Right ventricle myocardium inferior (tissue), 1 donor: ENCODE measurements at regions of chr7 and their contacts with region 1.

Region 1: DNA sequence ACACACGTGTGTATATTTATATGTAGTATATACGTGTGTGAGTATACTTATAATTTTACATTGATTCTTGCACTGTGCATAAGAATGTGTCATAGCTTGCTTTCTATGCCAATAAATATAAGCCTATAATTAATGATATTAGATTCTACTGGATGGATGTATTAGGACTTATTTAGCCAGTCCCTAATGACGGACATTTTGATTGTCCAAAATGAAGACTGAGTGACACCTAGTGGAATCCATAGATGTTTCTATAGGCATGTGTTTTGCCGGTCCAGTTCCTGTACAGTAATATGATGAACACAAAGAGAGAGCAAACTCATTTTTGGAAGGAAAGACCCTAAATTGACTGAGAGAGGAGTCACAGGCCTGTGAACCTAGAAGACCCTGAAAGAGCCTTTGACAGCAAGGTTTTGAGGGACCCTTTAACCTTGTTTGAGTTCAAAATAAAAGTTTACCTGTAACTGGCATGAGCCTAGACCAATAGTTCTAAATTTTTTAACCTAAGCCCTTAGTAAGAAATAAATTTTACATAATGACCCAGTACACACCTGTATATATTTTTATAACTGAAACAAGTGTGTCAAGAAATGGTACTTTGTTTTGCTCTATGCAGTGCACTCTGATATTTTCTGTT is 42.4 kb upstream of the AGBL3 start:
- DNase-seq: no peak
- ATAC-seq: no peak

Region 2: GRCh38 chr7:134632937-134633540 is 310.8 kb before region 1 on chr7:
- intact Hi-C with region 1: loop called (anchors 5 kb)
- DNase-seq: no peak
- ATAC-seq: no peak

Region 3: DNA sequence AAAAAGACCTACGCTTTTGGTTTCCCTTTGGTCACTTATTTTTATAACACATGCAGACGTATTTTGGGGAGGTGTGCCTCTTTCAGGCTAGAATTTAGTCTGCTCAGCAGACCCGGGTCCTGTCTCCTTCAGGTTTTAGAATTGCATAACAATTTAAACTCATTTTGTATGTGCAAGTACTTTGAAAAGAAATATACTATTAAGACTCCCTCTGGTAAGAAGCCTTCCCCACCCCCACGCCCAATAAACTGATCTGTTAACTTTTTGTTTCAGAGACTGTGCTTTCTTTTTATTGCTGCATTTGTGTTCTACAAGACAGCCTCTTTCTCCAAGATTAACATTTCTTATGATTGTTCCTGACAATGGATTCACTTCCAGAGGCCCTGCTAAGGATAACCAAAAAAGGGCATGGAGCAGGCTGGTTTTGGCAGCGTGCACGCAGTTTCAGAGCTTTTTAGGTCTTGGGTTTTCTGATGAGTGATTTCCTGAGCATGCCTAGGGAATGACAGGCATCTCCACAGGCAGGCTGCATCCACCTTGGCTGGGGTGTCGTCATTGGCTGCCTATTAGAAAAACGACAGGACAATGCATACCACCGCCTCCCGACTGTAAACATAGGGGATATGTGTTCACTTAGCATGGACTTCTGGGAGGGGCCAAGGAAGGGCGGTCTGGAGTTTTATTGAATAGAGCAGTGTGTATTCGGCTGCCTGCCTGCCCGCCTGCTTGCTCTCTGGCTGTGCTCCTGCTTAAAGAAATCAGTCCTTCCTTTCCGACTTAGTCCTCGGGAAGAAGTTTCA is 164.7 kb before region 1 on chr7 and contains the start of gene CALD1:
- intact Hi-C with region 1: loop called (anchors 5 kb)
- DNase-seq: peak; percentile 72
- ATAC-seq: peak; percentile 90
- total RNA-seq, gene CALD1: 99.1 TPM